ENCODE measurements at regions of chr12 and their contacts with region 1.

Region 1: DNA sequence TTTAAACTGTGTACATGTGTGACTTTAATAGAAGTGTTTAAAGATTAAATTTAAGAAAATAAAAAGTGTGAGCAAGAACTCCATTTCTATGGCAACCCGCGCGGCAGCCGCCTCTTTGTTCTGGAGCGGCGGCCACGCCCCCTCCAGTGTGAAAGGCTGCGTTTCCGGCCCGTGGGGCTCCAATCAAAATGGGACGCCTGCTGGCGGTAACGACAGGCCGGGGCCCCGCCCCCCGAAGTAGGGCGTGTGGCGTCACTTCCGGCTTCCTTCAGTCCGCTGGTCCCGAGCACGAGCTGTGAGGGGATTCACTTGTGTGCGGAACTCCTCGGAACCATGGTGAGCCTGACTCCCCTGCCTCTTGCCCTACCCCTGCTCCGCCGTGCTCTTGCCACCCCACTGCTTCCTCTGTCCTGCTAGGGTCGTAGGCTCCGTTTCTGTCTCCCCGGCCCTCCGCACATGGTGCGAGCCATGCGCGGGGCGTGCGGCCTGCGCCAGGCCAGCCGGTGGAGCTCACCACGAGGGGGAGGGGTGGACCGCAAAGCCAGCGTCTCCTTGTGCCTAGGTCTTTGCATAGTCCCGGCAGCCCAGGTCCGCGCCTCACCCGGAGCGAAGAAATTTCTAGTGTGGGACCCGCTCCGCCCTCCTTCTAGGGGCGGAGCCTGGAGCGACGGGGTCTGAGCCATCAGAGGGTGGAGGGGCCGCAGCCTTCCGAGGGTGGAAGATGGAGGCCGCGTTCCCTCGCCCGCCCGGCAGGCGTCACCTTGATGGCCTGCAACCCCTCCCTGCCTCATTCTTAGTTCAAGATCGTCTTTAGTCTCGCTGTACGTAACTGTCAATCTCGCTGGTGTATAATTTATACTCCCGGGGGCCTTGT is at the start of gene CCT2:
- DNase-seq: peak; percentile 92 to 98 (median 97)
- ATAC-seq: peak; percentile 88
- H3K4me3 ChIP-seq: peak within 1 kb of the TSS; percentile 88 to 98
- H3K4me3 Mint-ChIP-seq: peak within 1 kb of the TSS; percentile 96
- H3K27ac ChIP-seq: peak within 1 kb of the TSS; percentile 94 to 99
- H3K27ac Mint-ChIP-seq: peak within 1 kb of the TSS; percentile 96
- H3K4me1 ChIP-seq: peaks cover 11% of the 10 kb centered on the region
- H3K4me1 Mint-ChIP-seq: peaks cover 26% of the 10 kb centered on the region
- H3K27me3 ChIP-seq: no peaks in the 10 kb centered on the region
- H3K27me3 Mint-ChIP-seq: no peaks in the 10 kb centered on the region
- CTCF ChIP-seq: peak; percentile 22
- total RNA-seq, gene CCT2: 211 to 220 TPM

Region 2: GRCh38 chr12:68331869-68332727 is 1253.3 kb before region 1 on chr12 and contains the start of gene MDM1:
- CTCF ChIA-PET with region 1: no interaction called
- POLR2A ChIA-PET with region 1: no interaction called
- intact Hi-C with region 1: loop called in 1 of 2 experiments (anchors 2 kb)
- DNase-seq: peak; percentile 88 to 99 (median 96)
- ATAC-seq: peak; percentile 95
- H3K4me3 ChIP-seq: peak within 1 kb of the TSS; percentile 56 to 71
- H3K4me3 Mint-ChIP-seq: peak within 1 kb of the TSS; percentile 88
- H3K27ac ChIP-seq: peak within 1 kb of the TSS; percentile 45 to 46
- H3K27ac Mint-ChIP-seq: peak within 1 kb of the TSS; percentile 89
- H3K4me1 ChIP-seq: peaks cover 24% of the 10 kb centered on the region
- H3K4me1 Mint-ChIP-seq: peaks cover 49% of the 10 kb centered on the region
- H3K27me3 ChIP-seq: no peaks in the 10 kb centered on the region
- H3K27me3 Mint-ChIP-seq: no peaks in the 10 kb centered on the region
- CTCF ChIP-seq: no peak
- total RNA-seq, gene MDM1: 10.6 to 12.0 TPM

Region 3: DNA sequence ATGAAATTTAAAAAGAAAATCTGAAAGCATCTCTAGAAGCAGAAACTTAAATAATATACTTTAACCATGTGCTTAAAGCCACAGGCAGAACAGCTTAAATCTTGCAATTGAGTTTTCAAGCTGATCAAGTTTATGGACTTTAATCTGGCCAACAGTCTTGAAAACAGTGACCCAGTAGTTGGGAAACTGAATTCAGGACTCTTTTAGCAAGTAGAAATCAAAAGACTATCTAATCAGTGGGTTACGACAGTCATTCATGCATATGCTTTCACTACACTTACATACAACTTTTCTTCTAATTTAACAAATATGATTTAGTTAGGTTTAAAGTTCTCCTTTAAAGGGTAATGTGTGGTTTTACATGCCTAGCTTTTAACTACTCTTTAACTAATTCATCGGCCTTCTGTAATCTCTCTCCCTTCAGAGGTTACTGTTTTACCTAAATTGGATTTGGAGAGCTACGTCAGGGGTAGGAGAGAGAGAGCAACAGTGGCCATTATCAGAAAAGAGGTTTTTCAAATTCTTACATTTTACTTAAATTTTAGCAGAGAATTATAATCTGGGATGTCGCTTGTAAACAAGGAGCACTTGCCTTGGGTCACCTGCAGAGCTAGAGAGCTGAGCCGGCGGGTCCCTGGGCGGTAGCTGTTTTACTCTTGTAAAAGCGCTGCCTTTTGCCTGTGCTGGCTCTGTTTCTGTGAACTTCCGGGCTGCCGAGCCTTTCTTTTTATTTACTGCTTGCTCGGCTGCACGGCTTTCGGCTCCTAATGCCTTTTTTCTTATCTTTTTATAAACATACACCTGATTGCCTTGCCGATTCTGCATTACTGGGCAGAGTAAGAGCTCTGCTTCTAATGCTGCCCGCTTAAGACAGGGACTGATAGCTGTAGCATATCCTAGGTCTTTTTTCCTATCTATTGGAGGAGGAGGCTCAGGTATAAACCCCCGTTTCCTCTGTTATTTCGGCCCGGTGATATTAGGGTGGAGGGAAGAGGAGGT is 254.7 kb before region 1 on chr12:
- CTCF ChIA-PET with region 1: no interaction called
- POLR2A ChIA-PET with region 1: interaction called, 17 read pairs
- intact Hi-C with region 1: loop called in 1 of 2 experiments (anchors 1 kb)
- DNase-seq: peak; percentile 48 to 85 (median 65)
- ATAC-seq: peak; percentile 67
- H3K4me3 ChIP-seq: peak overlapping the region; percentile 53 to 61
- H3K4me3 Mint-ChIP-seq: peak overlapping the region; percentile 93
- H3K27ac ChIP-seq: peak overlapping the region; percentile 80 to 86
- H3K27ac Mint-ChIP-seq: peak overlapping the region; percentile 99
- H3K4me1 ChIP-seq: peaks cover 51% of the 10 kb centered on the region
- H3K4me1 Mint-ChIP-seq: peaks cover 56% of the 10 kb centered on the region
- H3K27me3 ChIP-seq: no peaks in the 10 kb centered on the region
- H3K27me3 Mint-ChIP-seq: no peaks in the 10 kb centered on the region
- CTCF ChIP-seq: no peak

Region 4: GRCh38 chr12:69470189-69471075 is 115.0 kb before region 1 on chr12 and contains the start of gene FRS2:
- CTCF ChIA-PET with region 1: no interaction called
- POLR2A ChIA-PET with region 1: no interaction called
- intact Hi-C with region 1: loop called (anchors 1 to 2 kb)
- DNase-seq: peak; percentile 66 to 91 (median 84)
- ATAC-seq: peak; percentile 97
- H3K4me3 ChIP-seq: peak within 1 kb of the TSS; percentile 86 to 88
- H3K4me3 Mint-ChIP-seq: peak within 1 kb of the TSS; percentile 98
- H3K27ac ChIP-seq: peak within 1 kb of the TSS; percentile 76 to 82
- H3K27ac Mint-ChIP-seq: peak within 1 kb of the TSS; percentile 97
- H3K4me1 ChIP-seq: peaks cover 30% of the 10 kb centered on the region
- H3K4me1 Mint-ChIP-seq: peaks cover 46% of the 10 kb centered on the region
- H3K27me3 ChIP-seq: no peaks in the 10 kb centered on the region
- H3K27me3 Mint-ChIP-seq: no peaks in the 10 kb centered on the region
- CTCF ChIP-seq: no peak
- total RNA-seq, gene FRS2: 31.1 to 32.4 TPM

Region 5: DNA sequence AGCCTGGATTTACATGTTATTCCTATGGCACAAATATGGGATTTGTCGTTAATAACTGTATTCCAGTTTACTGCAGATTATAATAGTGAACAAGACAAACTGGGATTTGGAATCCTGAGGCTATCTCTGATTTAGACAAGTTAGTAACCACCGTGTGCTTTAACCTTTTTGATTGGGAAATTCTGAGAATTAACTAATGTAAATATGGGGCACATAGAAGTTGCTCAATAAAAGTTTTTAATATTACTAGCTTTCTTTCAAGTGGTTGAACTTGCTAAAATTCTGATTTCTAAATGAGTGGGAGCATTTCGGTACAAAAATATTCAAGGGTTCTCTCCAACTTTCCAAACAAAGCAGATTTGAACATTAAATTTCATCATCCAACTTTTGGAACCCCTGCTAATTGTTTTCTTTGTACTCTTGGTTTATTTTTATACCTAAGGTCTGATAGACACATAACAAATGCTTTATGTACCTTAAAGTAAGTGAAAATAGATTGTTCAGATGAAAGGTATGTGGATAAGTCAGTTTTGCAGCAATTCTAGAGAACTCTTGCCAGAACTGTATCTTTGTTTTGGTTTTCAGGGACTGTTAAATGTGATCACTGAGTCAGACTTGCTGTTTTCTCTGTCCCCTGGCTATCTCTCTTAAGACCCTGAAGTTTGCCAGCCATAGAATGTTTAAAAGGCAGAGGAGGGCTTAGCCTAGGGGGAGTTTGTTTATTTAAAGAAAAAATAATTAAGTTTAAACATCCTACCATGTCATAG is 57.7 kb before region 1 on chr12:
- CTCF ChIA-PET with region 1: no interaction called
- POLR2A ChIA-PET with region 1: no interaction called
- intact Hi-C with region 1: no loop called
- DNase-seq: no peak
- ATAC-seq: no peak
- H3K4me3 ChIP-seq: no peak overlapping the region
- H3K4me3 Mint-ChIP-seq: no peak overlapping the region
- H3K27ac ChIP-seq: no peak overlapping the region
- H3K27ac Mint-ChIP-seq: peak overlapping the region; percentile 32
- H3K4me1 ChIP-seq: no peaks in the 10 kb centered on the region
- H3K4me1 Mint-ChIP-seq: peaks cover 45% of the 10 kb centered on the region
- H3K27me3 ChIP-seq: no peaks in the 10 kb centered on the region
- H3K27me3 Mint-ChIP-seq: no peaks in the 10 kb centered on the region
- CTCF ChIP-seq: no peak

Region 6: GRCh38 chr12:69570545-69571399 is 14.7 kb before region 1 on chr12:
- CTCF ChIA-PET with region 1: interaction called, 37 read pairs
- POLR2A ChIA-PET with region 1: interaction called, 3 read pairs
- intact Hi-C with region 1: no loop called
- DNase-seq: peak in 8 of 9 experiments; percentile 5 to 86 (median 56)
- ATAC-seq: peak; percentile 83
- H3K4me3 ChIP-seq: no peak overlapping the region
- H3K4me3 Mint-ChIP-seq: no peak overlapping the region
- H3K27ac ChIP-seq: no peak overlapping the region
- H3K27ac Mint-ChIP-seq: no peak overlapping the region
- H3K4me1 ChIP-seq: no peaks in the 10 kb centered on the region
- H3K4me1 Mint-ChIP-seq: no peaks in the 10 kb centered on the region
- H3K27me3 ChIP-seq: no peaks in the 10 kb centered on the region
- H3K27me3 Mint-ChIP-seq: no peaks in the 10 kb centered on the region
- CTCF ChIP-seq: peak; percentile 94

Region 7: DNA sequence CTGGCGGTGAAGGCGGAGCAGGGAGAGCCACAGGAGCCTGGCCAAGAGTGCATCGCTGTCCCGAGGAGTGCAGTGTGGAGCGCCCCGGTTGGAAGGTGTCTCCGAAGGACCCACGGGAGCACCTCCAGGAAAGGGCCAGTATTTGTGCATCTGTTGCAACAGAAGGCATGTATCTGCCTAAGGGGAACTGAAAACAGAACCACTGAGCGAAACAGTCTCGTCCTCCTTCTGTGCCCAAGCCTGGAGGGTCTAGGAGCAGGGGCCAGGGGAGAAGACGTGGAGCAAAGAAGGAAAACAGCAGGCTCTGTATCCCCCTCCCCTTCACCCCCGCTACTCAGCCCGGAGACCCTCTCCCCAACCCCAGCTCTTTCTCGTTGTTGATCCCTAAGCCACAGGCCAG is 30.6 kb after region 1 on chr12:
- CTCF ChIA-PET with region 1: no interaction called
- POLR2A ChIA-PET with region 1: no interaction called
- intact Hi-C with region 1: no loop called
- DNase-seq: no peak
- ATAC-seq: no peak
- H3K4me3 ChIP-seq: no peak overlapping the region
- H3K4me3 Mint-ChIP-seq: no peak overlapping the region
- H3K27ac ChIP-seq: no peak overlapping the region
- H3K27ac Mint-ChIP-seq: no peak overlapping the region
- H3K4me1 ChIP-seq: no peaks in the 10 kb centered on the region
- H3K4me1 Mint-ChIP-seq: no peaks in the 10 kb centered on the region
- H3K27me3 ChIP-seq: peaks cover 0 to 2% of the 10 kb centered on the region in 2 experiments
- H3K27me3 Mint-ChIP-seq: peaks cover 7% of the 10 kb centered on the region
- CTCF ChIP-seq: no peak

Region 8: DNA sequence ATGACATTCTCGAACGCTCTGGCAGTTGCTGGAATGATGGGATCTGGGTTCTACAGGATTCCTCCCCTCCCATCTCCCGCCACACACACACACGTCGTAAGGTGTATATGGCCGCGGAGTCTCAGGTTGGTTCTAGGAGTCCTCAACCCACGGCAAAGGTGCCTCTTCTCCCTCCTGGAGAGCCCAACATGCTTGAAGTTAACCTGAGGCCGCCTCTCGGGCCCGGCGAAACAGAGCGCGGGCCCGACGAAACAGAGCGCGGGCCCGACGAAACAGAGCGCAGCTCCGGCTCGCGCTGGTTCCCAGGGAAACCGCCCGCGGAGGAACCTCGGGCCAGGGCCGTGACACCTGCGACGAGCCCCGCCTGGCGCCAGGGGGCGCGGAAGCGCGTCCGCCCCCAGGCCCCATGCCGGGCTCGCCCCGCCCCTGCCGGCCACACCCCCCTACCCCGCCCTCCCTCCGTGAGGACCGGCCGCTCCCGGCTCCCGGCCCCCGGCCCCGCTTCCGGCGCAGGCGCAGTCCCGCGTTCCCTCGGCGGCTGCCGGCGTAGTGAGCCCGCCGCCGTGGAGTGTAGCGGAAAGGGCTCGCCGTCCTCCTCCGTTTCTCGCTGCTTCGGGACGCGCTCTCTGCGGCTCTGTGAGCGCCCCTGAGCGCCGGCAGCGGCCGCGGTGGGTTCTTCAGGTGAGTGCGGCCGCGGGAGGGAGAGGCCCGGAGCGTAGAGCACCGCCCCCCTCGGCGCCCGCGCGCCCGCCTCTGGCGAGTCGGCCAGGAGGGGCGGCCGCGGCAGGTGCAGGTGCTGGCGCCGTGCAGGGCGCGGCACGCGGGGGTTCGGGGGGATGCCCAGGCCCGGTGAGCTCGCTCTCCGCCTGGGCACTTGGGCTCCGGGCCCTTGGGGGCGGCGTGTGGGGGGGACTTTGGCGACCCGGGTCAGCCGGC is 153.2 kb after region 1 on chr12 and contains the start of gene RAB3IP:
- CTCF ChIA-PET with region 1: no interaction called
- POLR2A ChIA-PET with region 1: interaction called, 3 read pairs
- intact Hi-C with region 1: loop called (anchors 1 kb)
- DNase-seq: peak; percentile 84 to 95 (median 93)
- ATAC-seq: peak; percentile 87
- H3K4me3 ChIP-seq: peak within 1 kb of the TSS; percentile 64 to 79
- H3K4me3 Mint-ChIP-seq: peak within 1 kb of the TSS; percentile 82
- H3K27ac ChIP-seq: peak within 1 kb of the TSS; percentile 73
- H3K27ac Mint-ChIP-seq: peak within 1 kb of the TSS; percentile 69
- H3K4me1 ChIP-seq: peaks cover 11% of the 10 kb centered on the region
- H3K4me1 Mint-ChIP-seq: peaks cover 24% of the 10 kb centered on the region
- H3K27me3 ChIP-seq: no peaks in the 10 kb centered on the region
- H3K27me3 Mint-ChIP-seq: peaks cover 4% of the 10 kb centered on the region
- CTCF ChIP-seq: peak; percentile 89
- total RNA-seq, gene RAB3IP: 14.8 to 15.1 TPM